ENCODE measurements at regions of chr1 and their contacts with region 1.

Region 1: DNA sequence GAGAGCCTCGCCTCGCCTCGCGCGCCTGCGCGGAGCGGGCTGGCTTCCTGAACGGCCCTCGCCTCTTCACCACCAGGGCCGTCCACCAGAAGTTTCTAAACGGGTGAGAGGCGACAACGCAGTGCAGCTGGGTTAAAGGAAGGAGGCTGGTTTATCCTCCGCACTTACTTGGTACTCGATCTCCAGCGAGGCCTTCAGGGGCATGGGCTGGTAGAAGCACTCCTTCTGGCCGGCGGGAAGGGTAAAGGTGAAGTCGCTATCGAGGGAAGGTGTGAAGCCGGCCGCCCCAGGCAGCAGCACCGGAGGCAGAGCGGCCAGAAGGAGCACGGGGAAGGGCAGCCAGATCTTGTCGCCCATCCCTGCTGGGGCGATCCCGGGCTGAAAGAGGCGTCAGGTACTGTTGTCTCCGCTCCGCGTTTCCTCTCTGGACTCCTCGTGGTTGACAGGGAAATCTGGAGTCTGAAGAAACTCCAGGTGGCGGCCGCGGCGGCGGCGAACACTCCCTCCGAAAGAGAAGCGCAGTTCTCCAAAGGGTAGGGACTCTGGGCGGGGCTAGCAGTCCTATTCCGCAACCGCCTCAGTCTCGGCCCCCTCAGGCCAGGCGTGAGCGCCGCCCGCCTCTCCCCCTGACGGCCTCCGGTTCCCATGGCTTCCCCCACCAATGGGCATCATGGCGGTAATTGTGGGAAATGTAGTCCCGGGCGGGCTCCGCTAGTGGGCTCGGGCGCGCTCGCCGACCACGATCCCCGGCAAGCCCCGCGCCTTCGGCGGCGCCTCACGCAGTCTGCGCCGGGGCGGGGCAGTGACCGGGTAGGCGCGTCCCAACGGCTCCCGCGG is at the start of gene TMED5:
- DNase-seq: peak; percentile 98 to 99 (median 98)
- ATAC-seq: peak; percentile 98 to 99 (median 99)
- H3K4me3 ChIP-seq: peak within 1 kb of the TSS; percentile 63 to 98 (median 76)
- H3K27ac ChIP-seq: peak within 1 kb of the TSS; percentile 96 to 100 (median 98)
- H3K4me1 ChIP-seq: peaks cover 0 to 42% (median 25%) of the 10 kb centered on the region in 12 donors
- H3K27me3 ChIP-seq: no peaks in the 10 kb centered on the region
- CTCF ChIP-seq: peak in 7 of 12 donors; percentile 11 to 33 (median 24)
- POLR2A ChIP-seq: peak; percentile 48 to 94
- total RNA-seq, gene TMED5: 36.5 to 95.3 (median 55.0) TPM

Region 2: GRCh38 chr1:93015590-93015989 is 164.5 kb before region 1 on chr1:
- intact Hi-C with region 1: no loop called
- DNase-seq: no peak
- ATAC-seq: no peak
- H3K4me3 ChIP-seq: no peak overlapping the region
- H3K27ac ChIP-seq: peak overlapping the region in 1 of 12 donors; percentile 7
- H3K4me1 ChIP-seq: peaks cover 0 to 14% (median 0%) of the 10 kb centered on the region in 12 donors
- H3K27me3 ChIP-seq: peaks cover 0 to 4% (median 0%) of the 10 kb centered on the region in 9 donors
- CTCF ChIP-seq: no peak
- POLR2A ChIP-seq: no peak

Region 3: DNA sequence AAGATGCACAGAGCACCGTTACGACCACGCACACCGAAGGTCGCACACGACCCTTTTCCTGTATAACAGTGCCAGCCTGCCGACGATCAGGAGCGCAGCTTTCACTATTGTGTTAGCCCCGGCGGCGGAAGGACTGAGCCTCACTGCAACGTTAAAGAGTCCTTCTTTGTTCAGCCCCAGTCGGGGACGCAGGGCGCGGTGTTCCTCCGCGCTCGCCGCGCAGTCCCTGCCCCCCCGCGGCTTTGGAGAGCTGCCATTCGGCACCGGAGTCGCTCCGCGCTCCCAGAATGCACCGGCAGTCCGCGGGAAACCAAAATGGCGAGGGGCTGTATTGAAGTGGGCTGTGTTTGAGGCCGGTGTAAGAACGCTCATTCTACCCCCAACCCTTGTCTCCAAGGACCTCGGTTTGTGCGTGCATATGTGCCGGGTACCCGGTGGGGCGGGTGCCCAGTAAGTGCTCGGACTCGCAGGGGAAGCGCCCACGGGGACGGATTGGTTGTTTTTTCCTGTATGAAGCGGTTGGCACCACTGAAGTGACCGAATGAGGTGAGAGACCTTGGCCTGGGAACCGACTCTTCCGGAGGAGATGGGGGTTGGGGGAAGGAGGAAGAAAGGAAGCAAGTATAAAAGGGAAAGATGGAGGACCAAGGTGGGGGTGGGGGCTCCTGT is 101.0 kb before region 1 on chr1 and contains the start of gene MTF2:
- intact Hi-C with region 1: loop called in 6 of 10 experiments (anchors 1 to 10 kb)
- DNase-seq: peak; percentile 96 to 98 (median 97)
- ATAC-seq: peak; percentile 95 to 98 (median 97)
- H3K4me3 ChIP-seq: peak within 1 kb of the TSS; percentile 61 to 96 (median 84)
- H3K27ac ChIP-seq: peak within 1 kb of the TSS; percentile 54 to 91 (median 82)
- H3K4me1 ChIP-seq: peaks cover 0 to 50% (median 22%) of the 10 kb centered on the region in 12 donors
- H3K27me3 ChIP-seq: no peaks in the 10 kb centered on the region
- CTCF ChIP-seq: no peak
- POLR2A ChIP-seq: peak in 1 of 2 donors; percentile 75
- total RNA-seq, gene MTF2: 4.8 to 11.4 (median 8.0) TPM

Measured in heart left ventricle (tissue), 16 donors.